A549 (cell line): ENCODE measurements at regions of chr2 and their contacts with region 1.

Region 1: DNA sequence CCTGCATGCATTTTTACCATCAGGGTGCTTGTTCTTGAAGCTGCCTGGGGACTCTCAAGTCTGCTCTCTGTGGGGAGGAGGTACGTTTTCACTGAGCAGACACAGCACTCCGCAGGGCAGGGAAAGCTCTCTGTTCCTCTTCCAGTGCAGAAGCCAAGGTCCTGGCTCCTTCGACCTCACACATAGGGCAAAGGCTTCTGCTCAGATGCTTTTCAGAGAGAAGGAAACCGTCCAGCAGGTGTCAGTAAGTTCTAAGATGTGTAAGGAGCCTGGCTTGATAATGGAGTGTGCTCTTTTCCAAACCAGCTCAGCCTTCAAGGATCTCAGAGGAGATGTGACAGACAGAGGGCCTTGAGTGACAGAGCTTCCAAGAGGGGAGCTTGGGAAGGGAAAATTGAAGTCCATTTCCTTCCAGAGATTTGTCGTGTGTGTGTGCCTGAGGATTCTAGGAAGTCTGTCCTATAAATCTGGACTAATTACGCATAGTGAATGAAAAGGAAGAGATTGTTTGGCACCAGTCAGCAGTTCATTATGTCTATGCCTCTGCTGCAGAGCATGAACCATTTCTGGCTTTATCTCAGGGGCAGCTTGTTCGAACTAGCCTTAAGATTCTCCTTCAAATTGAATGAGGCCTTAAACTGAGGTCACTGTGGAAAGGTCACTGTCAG is 67.3 kb upstream of the UPP2 start:
- DNase-seq: peak; percentile 26 to 75
- ATAC-seq: peak; percentile 95 to 98
- H3K4me3 ChIP-seq: no peak overlapping the region
- H3K27ac ChIP-seq: no peak overlapping the region
- H3K4me1 ChIP-seq: no peaks in the 10 kb centered on the region
- CTCF ChIP-seq: peak; percentile 68
- EP300 ChIP-seq: no peak
- POLR2A ChIP-seq: no peak
- RAD21 ChIP-seq: peak; percentile 79 to 83

Region 2: DNA sequence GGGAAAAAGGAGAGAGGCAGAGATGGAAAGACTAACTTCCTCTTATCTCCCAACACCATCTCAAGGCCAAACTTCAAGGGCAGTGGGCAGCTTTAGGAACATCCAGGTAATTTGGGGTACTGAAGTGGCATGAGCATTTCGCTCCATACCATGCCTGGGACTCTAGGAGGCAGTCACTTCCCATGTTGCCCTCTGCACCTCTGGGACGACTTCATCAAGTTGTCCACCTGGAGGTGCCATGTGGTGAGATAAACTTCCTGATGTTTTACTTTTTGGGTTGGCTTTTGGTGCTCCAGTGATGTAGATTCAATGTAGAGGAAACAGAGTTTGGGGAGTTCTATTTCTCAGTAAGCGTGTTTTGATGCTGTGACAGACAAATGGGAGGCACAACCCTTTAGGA is 11.0 kb after region 1 on chr2:
- CTCF ChIA-PET with region 1: interaction called, 15 read pairs
- POLR2A ChIA-PET with region 1: no interaction called
- DNase-seq: peak in 1 of 2 experiments; percentile 45
- ATAC-seq: peak; percentile 54 to 80; a peak in 4 of 6 replicates
- H3K4me3 ChIP-seq: no peak overlapping the region
- H3K27ac ChIP-seq: no peak overlapping the region
- H3K4me1 ChIP-seq: no peaks in the 10 kb centered on the region
- CTCF ChIP-seq: peak; percentile 16; the same call in 1 of the 3 replicates
- EP300 ChIP-seq: no peak
- POLR2A ChIP-seq: no peak
- RAD21 ChIP-seq: peak; percentile 44 to 61; a peak in 3 of 5 replicates

Region 3: DNA sequence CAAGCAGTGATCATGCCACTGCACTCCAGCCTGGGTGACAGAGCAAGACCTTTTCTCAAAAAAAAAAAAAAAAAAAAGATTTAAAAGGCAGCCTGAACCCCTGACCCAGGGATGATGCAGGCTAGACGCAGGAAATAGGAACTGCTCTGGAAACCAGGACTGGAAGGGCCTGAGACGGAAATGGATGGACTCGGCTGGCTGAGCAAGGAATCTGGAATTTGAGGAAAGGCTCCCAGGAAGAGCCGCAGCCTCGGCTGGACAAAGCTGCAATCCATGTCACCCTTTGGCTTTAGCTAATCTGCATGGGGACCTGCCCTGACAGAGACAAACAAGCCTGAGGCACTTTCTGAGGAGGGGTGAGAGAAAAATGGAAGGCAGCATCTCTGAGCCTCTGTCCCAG is 705.8 kb after region 1 on chr2:
- CTCF ChIA-PET with region 1: interaction called, 254 read pairs
- POLR2A ChIA-PET with region 1: no interaction called
- DNase-seq: no peak
- ATAC-seq: no peak
- H3K4me3 ChIP-seq: no peak overlapping the region
- H3K27ac ChIP-seq: no peak overlapping the region
- H3K4me1 ChIP-seq: no peaks in the 10 kb centered on the region
- CTCF ChIP-seq: no peak
- EP300 ChIP-seq: no peak
- POLR2A ChIP-seq: no peak
- RAD21 ChIP-seq: no peak